Astrocyte of the cerebellum (primary cell): ENCODE measurements at regions of chr17 and their contacts with region 1.

Region 1: DNA sequence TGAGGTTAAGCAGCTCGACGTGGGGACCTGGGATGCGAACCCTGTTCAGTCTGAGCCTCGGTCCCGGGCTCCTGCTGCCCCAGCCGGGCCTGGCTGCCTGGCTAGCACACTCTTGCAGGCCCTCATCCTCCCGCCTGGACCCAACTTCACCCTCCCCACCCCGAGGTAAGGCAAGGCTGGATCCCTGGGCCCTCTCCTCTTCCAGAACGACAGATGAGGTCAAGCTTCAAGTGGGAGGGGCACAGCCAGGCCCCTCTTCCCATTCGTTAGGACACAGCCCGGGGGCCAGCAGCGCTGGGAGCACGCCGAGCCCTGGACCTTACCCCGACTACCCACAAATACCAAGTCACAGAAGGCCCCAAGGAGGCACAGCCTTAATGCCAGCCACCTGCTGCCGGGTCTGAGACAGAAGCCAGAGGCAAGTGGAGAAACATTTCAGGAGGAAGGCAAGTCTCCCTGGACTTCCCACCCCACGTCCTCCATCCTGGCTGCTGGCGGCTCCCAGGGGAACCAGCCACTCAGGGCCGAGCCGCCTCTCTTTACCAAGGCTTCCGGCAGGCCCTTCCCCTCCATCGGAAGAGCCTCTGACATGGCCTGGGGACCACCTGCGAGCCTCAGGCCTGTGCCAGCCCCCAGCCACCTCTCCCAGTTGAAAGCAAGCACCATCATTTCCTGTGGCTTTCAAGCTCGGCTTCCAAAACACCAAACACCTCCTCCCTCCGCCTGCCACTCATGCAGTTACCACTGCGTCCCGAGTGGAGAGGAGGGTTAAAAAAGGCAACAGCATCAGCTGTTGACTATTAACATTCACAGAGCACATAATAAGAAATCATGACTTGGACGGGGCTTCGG is 59.9 kb downstream of the RPH3AL start:
- DNase-seq: no peak
- H3K4me3 ChIP-seq: no peak overlapping the region
- CTCF ChIP-seq: no peak

Region 2: DNA sequence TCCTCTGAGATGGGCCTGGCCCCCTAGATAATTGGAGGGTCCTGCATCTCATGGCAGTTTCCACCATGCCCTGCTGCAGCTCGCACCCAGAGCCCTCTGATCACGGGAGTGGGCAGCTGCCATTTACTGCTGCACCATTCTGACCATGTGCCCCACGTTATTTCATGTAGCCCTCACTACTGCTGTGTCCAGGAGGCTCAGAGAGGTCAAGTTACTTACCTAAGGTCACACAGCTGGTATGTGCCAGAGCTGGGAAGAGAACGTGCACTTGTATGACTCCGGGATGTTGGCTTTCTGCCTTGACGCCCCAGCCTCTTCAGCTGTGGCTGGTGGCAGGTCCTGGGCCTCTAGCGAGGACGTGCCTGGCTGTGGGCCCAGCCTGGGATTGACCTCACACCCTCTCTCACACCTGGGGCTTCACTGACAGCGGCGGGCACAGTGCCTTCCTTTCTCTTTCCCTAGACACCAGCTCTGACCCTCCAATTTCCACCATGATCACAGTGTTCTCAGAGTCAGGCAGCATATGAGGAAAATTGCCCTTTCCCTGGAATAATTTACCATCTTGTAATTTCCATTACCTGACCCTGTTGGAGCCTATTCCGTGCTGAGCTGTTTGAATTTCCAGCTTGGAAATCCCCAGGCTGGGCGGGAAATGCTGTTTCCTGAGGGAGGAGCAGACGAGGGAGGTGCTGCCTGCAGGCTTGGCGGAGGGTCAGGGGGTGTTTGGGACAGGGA is 92.8 kb before region 1 on chr17:
- in situ Hi-C with region 1: loop called (anchors 5 kb)
- DNase-seq: no peak
- H3K4me3 ChIP-seq: no peak overlapping the region
- CTCF ChIP-seq: no peak